ENCODE measurements at regions of chr3 and their contacts with region 1.

Region 1: GRCh38 chr3:194682694-194683310 is 2.9 kb upstream of the FAM43A start:
- DNase-seq: peak; percentile 77
- ATAC-seq: peak; percentile 73
- H3K4me3 Mint-ChIP-seq: no peak overlapping the region
- H3K27ac Mint-ChIP-seq: no peak overlapping the region
- H3K4me1 Mint-ChIP-seq: peaks cover 41% of the 10 kb centered on the region
- H3K27me3 Mint-ChIP-seq: peaks cover 30% of the 10 kb centered on the region

Region 2: DNA sequence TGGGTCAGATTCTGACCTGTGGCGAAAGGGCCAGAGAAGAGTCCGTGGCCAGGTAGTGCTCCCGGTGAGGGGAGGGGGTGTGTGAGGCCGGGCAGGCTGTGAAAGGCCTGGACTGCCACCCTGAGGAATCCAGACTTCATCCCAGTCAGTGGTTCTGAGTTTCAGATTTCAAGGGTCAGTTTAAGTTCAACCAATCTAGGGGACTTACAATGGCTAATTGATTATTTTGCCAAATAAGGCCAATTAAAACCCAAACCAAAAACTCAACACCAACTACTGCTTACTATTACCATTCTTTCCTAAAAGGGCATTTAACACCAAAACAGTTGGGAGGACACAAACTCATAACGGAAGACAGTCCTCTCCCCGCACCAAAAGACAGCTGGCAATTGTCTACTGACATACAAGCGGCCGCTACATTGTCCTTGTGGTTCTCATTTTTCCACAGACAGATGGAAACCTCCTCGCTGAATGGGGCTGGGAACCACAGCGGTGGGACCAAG is 80.1 kb before region 1 on chr3:
- CTCF ChIA-PET with region 1: no interaction called
- POLR2A ChIA-PET with region 1: no interaction called
- intact Hi-C with region 1: no loop called
- DNase-seq: no peak
- ATAC-seq: no peak
- H3K4me3 Mint-ChIP-seq: no peak overlapping the region
- H3K27ac Mint-ChIP-seq: no peak overlapping the region
- H3K4me1 Mint-ChIP-seq: no peaks in the 10 kb centered on the region
- H3K27me3 Mint-ChIP-seq: no peaks in the 10 kb centered on the region

Region 3: GRCh38 chr3:194769020-194769643 is 86.3 kb after region 1 on chr3:
- CTCF ChIA-PET with region 1: interaction called, 7 read pairs
- POLR2A ChIA-PET with region 1: interaction called, 4 read pairs
- intact Hi-C with region 1: loop called (anchors 1 to 2 kb)
- DNase-seq: peak; percentile 96
- ATAC-seq: peak; percentile 99
- H3K4me3 Mint-ChIP-seq: peak overlapping the region; percentile 76
- H3K27ac Mint-ChIP-seq: peak overlapping the region; percentile 91
- H3K4me1 Mint-ChIP-seq: peaks cover 17% of the 10 kb centered on the region
- H3K27me3 Mint-ChIP-seq: peaks cover 9% of the 10 kb centered on the region

Region 4: GRCh38 chr3:194945508-194945907 is 262.7 kb after region 1 on chr3:
- CTCF ChIA-PET with region 1: no interaction called
- POLR2A ChIA-PET with region 1: interaction called, 3 read pairs
- intact Hi-C with region 1: loop called in 1 of 2 experiments (anchors 5 kb)
- DNase-seq: no peak
- ATAC-seq: no peak
- H3K4me3 Mint-ChIP-seq: no peak overlapping the region
- H3K27ac Mint-ChIP-seq: no peak overlapping the region
- H3K4me1 Mint-ChIP-seq: no peaks in the 10 kb centered on the region
- H3K27me3 Mint-ChIP-seq: peaks cover 4% of the 10 kb centered on the region

Region 5: DNA sequence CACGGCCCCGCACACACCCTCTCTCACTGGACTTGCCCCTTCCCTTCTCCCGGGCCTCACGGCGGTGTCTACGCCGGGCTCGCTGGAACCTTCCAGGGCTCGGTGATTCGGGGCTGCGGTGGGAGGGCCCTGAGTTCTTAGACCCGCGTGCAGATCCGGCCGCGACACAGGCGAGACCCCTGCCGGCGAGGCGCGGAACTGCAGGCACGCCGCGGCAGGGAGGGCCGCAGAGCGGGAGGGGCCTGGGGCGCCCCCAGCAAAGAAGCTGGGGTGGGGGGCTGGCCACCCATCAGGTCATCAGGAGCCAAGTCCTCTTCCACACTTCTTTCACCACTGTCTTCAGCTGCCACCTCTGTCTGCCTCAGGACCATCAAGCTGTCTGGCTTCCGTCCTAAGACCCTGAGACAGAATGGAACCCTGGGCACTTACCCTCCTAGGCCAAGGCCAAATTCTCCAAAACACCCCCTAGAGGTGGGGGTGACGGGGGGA is 423.7 kb after region 1 on chr3:
- CTCF ChIA-PET with region 1: interaction called, 17 read pairs
- POLR2A ChIA-PET with region 1: no interaction called
- intact Hi-C with region 1: loop called (anchors 1 kb)
- DNase-seq: peak; percentile 80
- ATAC-seq: peak; percentile 85
- H3K4me3 Mint-ChIP-seq: peak overlapping the region; percentile 9
- H3K27ac Mint-ChIP-seq: peak overlapping the region; percentile 55
- H3K4me1 Mint-ChIP-seq: peaks cover 4% of the 10 kb centered on the region
- H3K27me3 Mint-ChIP-seq: no peaks in the 10 kb centered on the region

Region 6: GRCh38 chr3:195259475-195260279 is 576.9 kb after region 1 on chr3:
- CTCF ChIA-PET with region 1: interaction called, 4 read pairs
- POLR2A ChIA-PET with region 1: interaction called, 4 read pairs
- intact Hi-C with region 1: loop called in 1 of 2 experiments (anchors 1 kb)
- DNase-seq: peak; percentile 90
- ATAC-seq: peak; percentile 81
- H3K4me3 Mint-ChIP-seq: peak overlapping the region; percentile 30
- H3K27ac Mint-ChIP-seq: no peak overlapping the region
- H3K4me1 Mint-ChIP-seq: peaks cover 15% of the 10 kb centered on the region
- H3K27me3 Mint-ChIP-seq: no peaks in the 10 kb centered on the region

Region 7: GRCh38 chr3:195442573-195443390 is 760.0 kb after region 1 on chr3 and contains the start of gene ACAP2:
- CTCF ChIA-PET with region 1: no interaction called
- POLR2A ChIA-PET with region 1: no interaction called
- intact Hi-C with region 1: loop called in 1 of 2 experiments (anchors 10 kb)
- DNase-seq: peak; percentile 99
- ATAC-seq: peak; percentile 96
- H3K4me3 Mint-ChIP-seq: peak within 1 kb of the TSS; percentile 96
- H3K27ac Mint-ChIP-seq: peak within 1 kb of the TSS; percentile 91
- H3K4me1 Mint-ChIP-seq: peaks cover 44% of the 10 kb centered on the region
- H3K27me3 Mint-ChIP-seq: no peaks in the 10 kb centered on the region
- total RNA-seq, gene ACAP2: 43.7 to 51.9 TPM

Region 8: DNA sequence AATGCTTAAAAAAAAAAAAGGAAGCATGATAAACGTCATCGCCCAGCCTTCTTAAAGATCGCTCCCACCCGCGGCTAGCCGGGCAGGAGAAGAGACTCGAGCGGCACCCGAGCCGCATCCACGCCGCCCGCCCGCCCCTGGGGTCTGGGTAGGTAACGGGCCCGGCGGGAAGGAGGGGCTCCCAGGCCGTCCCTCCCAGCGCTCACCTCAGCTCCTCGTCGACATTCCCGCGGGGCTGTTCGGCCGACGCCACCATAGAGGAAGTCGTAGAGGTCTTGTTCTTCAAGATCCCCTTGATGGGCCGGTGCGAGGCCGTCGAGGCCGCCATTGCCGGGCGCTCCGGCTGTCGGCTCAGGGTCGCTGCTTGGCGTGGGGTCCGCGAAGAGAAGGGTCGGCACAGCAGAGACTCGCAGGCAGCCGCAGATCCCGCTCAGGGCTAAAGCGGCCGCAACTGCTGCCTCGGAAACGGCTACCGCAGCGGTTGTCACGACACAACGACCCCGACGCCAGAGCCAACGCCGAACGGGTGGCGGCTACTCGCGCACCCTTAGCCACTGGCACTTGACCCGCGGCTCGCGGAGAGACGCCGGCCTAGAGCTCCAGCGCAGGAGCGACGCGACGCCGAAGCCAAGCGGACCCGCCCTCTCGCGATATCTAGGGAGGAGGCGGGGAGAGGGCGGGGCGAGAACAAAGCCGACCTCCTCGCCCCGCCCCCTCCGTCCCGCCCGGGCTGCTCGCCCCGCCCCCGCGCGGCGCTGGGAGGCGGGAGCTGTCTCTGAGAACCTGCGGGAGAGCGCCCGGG is 860.1 kb after region 1 on chr3 and contains the start of gene PPP1R2:
- CTCF ChIA-PET with region 1: no interaction called
- POLR2A ChIA-PET with region 1: no interaction called
- intact Hi-C with region 1: loop called in 1 of 2 experiments (anchors 5 kb)
- DNase-seq: peak; percentile 97
- ATAC-seq: peak; percentile 72
- H3K4me3 Mint-ChIP-seq: peak within 1 kb of the TSS; percentile 95
- H3K27ac Mint-ChIP-seq: peak within 1 kb of the TSS; percentile 95
- H3K4me1 Mint-ChIP-seq: peaks cover 65% of the 10 kb centered on the region
- H3K27me3 Mint-ChIP-seq: no peaks in the 10 kb centered on the region
- total RNA-seq, gene PPP1R2: 77.0 to 134 TPM

Measured in activated CD4-positive, alpha-beta T cell treated with anti-CD3 and anti-CD28 coated beads for 36 hours (primary cell).